IMR-90 (cell line): ENCODE measurements at regions of chr15 and their contacts with region 1.

Region 1: DNA sequence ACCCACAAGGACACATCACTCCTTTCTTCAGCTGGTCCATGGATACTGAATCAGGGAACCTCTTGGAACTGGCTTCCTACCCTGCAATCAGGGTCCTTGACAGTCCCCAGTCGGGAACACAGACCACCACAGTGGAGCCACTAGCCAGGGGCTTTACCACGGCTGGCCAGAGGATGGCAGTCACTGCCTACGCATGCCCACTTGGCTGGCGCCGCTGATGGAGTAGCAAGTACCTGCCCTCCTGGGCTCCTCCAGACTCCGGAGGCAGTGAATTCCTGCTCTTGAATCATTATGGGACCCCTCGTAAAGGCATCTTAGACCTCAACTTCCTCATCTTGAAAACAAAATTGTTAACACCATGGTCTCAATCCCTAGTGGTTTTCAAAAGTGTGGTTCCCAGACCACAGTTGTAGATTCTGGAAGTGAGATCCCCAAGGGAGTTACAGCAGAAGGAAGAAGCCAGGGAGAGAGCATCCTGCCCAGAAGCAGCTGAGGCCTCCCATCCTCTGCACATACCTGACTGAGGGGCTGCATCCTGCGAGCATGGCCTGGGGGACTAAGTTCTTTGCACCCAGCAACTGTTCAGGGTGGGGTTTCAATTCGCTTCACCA is 9.1 kb upstream of the SKIC8 start:
- DNase-seq: peak; percentile 58
- ATAC-seq: peak; percentile 92
- H3K4me3 ChIP-seq: no peak overlapping the region
- H3K27ac ChIP-seq: no peak overlapping the region
- H3K4me1 ChIP-seq: peaks cover 6% of the 10 kb centered on the region
- H3K27me3 ChIP-seq: peaks cover 16% of the 10 kb centered on the region; the same call in 1 of the 2 replicates
- CTCF ChIP-seq: peak; percentile 91
- POLR2A ChIP-seq: no peak
- RAD21 ChIP-seq: peak; percentile 95

Region 2: GRCh38 chr15:78415286-78415685 is 106.8 kb after region 1 on chr15:
- CTCF ChIA-PET with region 1: interaction called, 3 read pairs
- POLR2A ChIA-PET with region 1: no interaction called
- dilution Hi-C with region 1: no loop called
- in situ Hi-C with region 1: loop called (anchors 5 kb)
- intact Hi-C with region 1: loop called (anchors 1 kb)
- DNase-seq: no peak
- ATAC-seq: peak; percentile 69
- H3K4me3 ChIP-seq: no peak overlapping the region
- H3K27ac ChIP-seq: no peak overlapping the region
- H3K4me1 ChIP-seq: no peaks in the 10 kb centered on the region
- H3K27me3 ChIP-seq: peaks cover 29% of the 10 kb centered on the region
- CTCF ChIP-seq: peak; percentile 38
- POLR2A ChIP-seq: no peak
- RAD21 ChIP-seq: peak; percentile 28; the same call in 1 of the 2 replicates

Region 3: DNA sequence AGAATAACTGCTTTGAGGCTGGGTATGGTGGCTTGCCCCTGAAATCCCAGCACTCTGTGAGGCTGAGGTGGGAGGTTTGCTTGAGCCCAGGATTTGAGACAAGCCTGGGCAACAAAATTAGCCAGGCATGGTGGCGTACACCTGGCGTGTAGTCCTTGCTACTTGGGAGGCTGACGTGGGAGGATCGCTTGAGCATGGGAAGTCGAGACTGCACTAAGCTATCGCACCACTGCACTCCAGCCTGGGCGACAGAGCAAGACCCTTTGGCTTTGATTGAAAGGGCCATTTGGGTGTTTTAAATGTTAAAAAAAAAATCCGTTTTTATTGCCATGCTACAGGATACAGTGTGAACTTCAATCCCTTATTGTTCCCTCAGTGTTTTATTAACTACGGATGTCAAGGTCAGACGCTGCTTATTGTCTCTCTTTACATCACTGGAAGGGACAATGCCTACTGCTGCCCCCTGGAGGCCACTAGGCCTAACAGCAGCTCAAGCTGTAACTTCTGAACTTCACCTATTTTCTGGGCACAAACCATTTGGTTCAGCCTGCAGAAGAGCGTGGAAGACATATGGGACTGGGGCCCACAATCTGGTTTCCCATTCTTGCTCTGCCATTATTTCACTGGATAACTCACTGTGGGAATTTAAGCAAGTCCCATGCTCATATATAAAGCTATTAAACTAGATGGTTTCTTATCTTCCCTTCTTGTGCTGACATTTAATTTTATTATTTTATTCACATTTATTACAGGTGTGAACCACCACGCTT is 114.2 kb after region 1 on chr15:
- CTCF ChIA-PET with region 1: interaction called, 5 read pairs
- POLR2A ChIA-PET with region 1: no interaction called
- dilution Hi-C with region 1: no loop called
- in situ Hi-C with region 1: loop called (anchors 5 kb)
- intact Hi-C with region 1: loop called (anchors 1 kb)
- DNase-seq: peak; percentile 45
- ATAC-seq: peak; percentile 98
- H3K4me3 ChIP-seq: no peak overlapping the region
- H3K27ac ChIP-seq: no peak overlapping the region
- H3K4me1 ChIP-seq: no peaks in the 10 kb centered on the region
- H3K27me3 ChIP-seq: peaks cover 20% of the 10 kb centered on the region
- CTCF ChIP-seq: peak; percentile 83
- POLR2A ChIP-seq: no peak
- RAD21 ChIP-seq: peak; percentile 67

Region 4: DNA sequence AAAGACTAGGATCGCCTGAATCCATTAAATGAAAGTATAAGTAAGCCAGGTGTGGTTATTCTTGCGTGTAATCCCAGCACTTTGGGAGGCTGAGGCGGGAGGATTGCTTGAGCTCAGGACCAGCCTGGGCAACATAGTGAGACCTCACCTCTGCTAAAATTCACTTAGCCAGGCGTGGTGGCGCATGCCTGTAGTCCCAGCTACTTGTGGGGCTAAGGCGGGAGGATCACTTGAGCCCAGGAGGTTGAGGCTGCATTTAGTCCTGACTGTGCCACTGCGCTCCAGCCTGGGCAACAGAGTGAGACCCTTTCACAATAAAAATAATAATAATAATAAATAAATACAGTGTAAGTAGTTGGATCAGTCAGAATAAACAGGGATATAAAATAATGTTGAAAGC is 173.4 kb after region 1 on chr15:
- CTCF ChIA-PET with region 1: interaction called, 3 read pairs
- POLR2A ChIA-PET with region 1: no interaction called
- dilution Hi-C with region 1: no loop called
- in situ Hi-C with region 1: no loop called
- intact Hi-C with region 1: loop called (anchors 1 kb)
- DNase-seq: no peak
- ATAC-seq: peak; percentile 11; the same call in 1 of the 2 replicates
- H3K4me3 ChIP-seq: no peak overlapping the region
- H3K27ac ChIP-seq: no peak overlapping the region
- H3K4me1 ChIP-seq: peaks cover 2% of the 10 kb centered on the region; the same call in 1 of the 2 replicates
- H3K27me3 ChIP-seq: no peaks in the 10 kb centered on the region
- CTCF ChIP-seq: no peak
- POLR2A ChIP-seq: no peak
- RAD21 ChIP-seq: no peak

Region 5: GRCh38 chr15:78709263-78709882 is 400.8 kb after region 1 on chr15:
- CTCF ChIA-PET with region 1: no interaction called
- POLR2A ChIA-PET with region 1: no interaction called
- dilution Hi-C with region 1: no loop called
- in situ Hi-C with region 1: no loop called
- intact Hi-C with region 1: loop called (anchors 2 kb)
- DNase-seq: peak; percentile 7
- ATAC-seq: peak; percentile 100
- H3K4me3 ChIP-seq: no peak overlapping the region
- H3K27ac ChIP-seq: no peak overlapping the region
- H3K4me1 ChIP-seq: no peaks in the 10 kb centered on the region; the same call in 1 of the 2 replicates
- H3K27me3 ChIP-seq: peaks cover 21% of the 10 kb centered on the region
- CTCF ChIP-seq: peak; percentile 77
- POLR2A ChIP-seq: no peak
- RAD21 ChIP-seq: peak; percentile 79